A673 (cell line): ENCODE measurements at regions of chr6 and their contacts with region 1.

Region 1: GRCh38 chr6:10369881-10370280 is 45.0 kb downstream of the TFAP2A start:
- DNase-seq: no peak
- H3K4me3 ChIP-seq: no peak overlapping the region
- H3K27ac ChIP-seq: no peak overlapping the region
- H3K4me1 ChIP-seq: no peaks in the 10 kb centered on the region
- H3K27me3 ChIP-seq: no peaks in the 10 kb centered on the region
- CTCF ChIP-seq: no peak

Region 2: DNA sequence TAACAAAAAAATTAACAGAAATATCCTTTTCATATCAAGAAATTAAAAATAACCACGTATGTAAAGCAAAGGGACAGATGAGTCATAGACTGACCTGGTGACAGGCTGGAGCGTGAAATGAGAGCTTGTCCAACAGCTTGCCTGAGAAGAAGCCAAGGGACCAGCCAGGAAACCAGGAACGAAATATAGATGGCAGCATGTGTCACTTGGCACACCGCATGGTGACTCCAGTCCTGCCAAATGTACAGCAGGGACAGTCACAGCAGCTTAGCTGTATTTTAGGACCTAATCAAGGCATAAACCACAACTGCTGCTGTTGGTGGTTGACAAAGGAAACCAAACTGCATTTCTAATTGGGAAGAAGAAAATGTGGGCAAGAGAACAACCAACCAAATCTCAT is 710.1 kb before region 1 on chr6:
- CTCF ChIA-PET with region 1: no interaction called
- POLR2A ChIA-PET with region 1: interaction called, 17 read pairs
- intact Hi-C with region 1: no loop called
- DNase-seq: no peak
- H3K4me3 ChIP-seq: no peak overlapping the region
- H3K27ac ChIP-seq: no peak overlapping the region
- H3K4me1 ChIP-seq: no peaks in the 10 kb centered on the region
- H3K27me3 ChIP-seq: no peaks in the 10 kb centered on the region
- CTCF ChIP-seq: no peak

Region 3: DNA sequence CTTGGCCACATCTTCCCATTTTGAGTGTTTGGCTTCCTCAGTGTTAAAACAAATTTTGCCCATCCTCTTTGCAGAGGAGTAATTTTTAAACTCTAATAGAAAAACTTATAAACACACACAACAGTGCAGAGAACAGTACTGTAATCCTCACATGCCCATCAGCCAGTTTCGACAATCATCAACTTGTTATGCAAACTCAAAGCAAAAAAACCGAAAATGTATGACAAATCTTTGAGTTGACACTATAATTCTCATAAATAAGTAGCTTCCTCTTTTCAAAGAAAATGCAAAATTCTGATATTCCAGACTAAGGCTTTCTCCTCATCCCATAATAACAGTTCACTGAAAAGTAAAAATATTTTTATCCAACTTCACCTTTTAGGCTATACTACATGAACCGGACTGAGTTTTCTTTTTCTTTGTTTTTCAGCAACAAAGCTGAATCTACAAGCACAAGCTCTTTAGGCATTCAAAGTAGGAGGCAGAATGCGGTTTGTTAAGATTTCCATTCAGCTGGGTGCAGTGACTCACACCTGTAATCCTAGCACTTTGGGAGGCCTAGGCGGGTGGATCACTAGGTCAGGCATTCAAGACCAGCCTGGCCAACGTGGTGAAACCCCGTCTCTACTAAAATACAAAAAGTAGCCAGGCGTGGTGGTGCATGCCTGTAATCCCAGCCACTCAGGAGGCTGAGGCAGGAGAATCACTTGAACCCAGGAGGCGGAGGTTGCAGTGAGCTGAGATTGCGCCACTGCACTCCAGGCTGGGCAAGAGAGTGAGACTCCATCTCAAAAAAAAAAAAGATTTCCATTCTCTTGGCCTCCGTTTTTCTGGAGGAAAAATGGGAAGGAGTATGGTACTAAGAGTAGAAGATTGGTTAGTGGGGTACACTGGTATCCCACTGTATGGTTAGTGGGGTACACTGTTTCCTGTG is 226.1 kb after region 1 on chr6:
- CTCF ChIA-PET with region 1: no interaction called
- POLR2A ChIA-PET with region 1: no interaction called
- intact Hi-C with region 1: no loop called
- DNase-seq: no peak
- H3K4me3 ChIP-seq: no peak overlapping the region
- H3K27ac ChIP-seq: no peak overlapping the region
- H3K4me1 ChIP-seq: no peaks in the 10 kb centered on the region
- H3K27me3 ChIP-seq: no peaks in the 10 kb centered on the region
- CTCF ChIP-seq: no peak

Region 4: GRCh38 chr6:11033825-11034224 is 663.9 kb after region 1 on chr6:
- CTCF ChIA-PET with region 1: no interaction called
- POLR2A ChIA-PET with region 1: no interaction called
- intact Hi-C with region 1: no loop called
- DNase-seq: no peak
- H3K4me3 ChIP-seq: no peak overlapping the region
- H3K27ac ChIP-seq: no peak overlapping the region
- H3K4me1 ChIP-seq: peaks cover 14% of the 10 kb centered on the region
- H3K27me3 ChIP-seq: no peaks in the 10 kb centered on the region
- CTCF ChIP-seq: no peak